CD8-positive, alpha-beta T cell (primary cell): ENCODE measurements at regions of chr3 and their contacts with region 1.

Region 1: GRCh38 chr3:100737334-100737733 is 28.0 kb downstream of the TFG start:
- DNase-seq: peak in 1 of 9 experiments; percentile 14
- ATAC-seq: no peak
- H3K4me3 ChIP-seq: no peak overlapping the region
- H3K4me3 Mint-ChIP-seq: no peak overlapping the region
- H3K27ac ChIP-seq: no peak overlapping the region
- H3K27ac Mint-ChIP-seq: no peak overlapping the region
- H3K4me1 ChIP-seq: no peaks in the 10 kb centered on the region
- H3K4me1 Mint-ChIP-seq: peaks cover 9% of the 10 kb centered on the region
- H3K27me3 ChIP-seq: no peaks in the 10 kb centered on the region
- H3K27me3 Mint-ChIP-seq: no peaks in the 10 kb centered on the region
- CTCF ChIP-seq: peak; percentile 20

Region 2: GRCh38 chr3:100136921-100137320 is 600.4 kb before region 1 on chr3:
- CTCF ChIA-PET with region 1: no interaction called
- POLR2A ChIA-PET with region 1: no interaction called
- intact Hi-C with region 1: no loop called
- DNase-seq: no peak
- ATAC-seq: no peak
- H3K4me3 ChIP-seq: no peak overlapping the region
- H3K4me3 Mint-ChIP-seq: no peak overlapping the region
- H3K27ac ChIP-seq: no peak overlapping the region
- H3K27ac Mint-ChIP-seq: no peak overlapping the region
- H3K4me1 ChIP-seq: no peaks in the 10 kb centered on the region
- H3K4me1 Mint-ChIP-seq: no peaks in the 10 kb centered on the region
- H3K27me3 ChIP-seq: no peaks in the 10 kb centered on the region
- H3K27me3 Mint-ChIP-seq: no peaks in the 10 kb centered on the region
- CTCF ChIP-seq: no peak

Region 3: DNA sequence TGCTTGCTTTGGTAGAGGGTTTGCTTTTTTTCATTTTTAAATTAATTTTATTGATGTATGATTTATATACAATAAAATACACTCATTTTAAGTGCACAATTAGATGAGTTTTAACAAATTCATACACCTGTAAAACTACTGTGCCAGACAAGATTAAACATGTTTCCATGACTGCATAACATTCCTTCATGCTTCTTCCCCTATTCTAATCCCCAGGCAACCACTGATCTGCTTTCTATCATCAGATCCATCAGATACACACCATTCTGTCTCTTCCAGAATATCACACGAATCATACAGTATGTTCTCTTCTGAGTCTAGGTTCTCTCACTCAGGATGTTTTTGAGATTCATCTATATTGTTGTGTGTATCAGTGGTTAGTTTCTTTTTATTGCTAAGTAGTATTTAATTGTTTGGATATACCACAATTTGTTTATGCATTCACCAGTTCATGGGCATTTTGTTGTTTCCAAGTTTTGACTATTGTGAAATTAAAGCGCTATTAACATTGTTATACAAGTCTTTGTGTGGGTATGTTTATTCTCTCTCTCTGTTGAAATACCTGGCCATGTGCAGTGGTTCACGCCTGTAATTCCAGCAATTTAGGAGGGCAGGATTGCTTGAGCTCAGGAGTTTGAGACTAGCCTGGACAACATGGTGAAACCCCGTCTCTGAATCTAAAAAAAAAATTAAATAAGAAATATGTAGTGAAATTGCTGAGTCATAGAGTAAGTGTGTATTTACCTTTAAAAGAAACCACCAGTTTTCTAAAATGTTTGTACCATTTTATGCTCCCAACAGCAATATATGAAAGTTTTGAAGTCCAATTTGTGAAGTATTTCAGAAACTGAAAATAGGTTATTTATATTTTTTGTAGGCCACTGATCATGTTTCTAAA is 35.0 kb before region 1 on chr3:
- CTCF ChIA-PET with region 1: no interaction called
- POLR2A ChIA-PET with region 1: no interaction called
- intact Hi-C with region 1: no loop called
- DNase-seq: no peak
- ATAC-seq: no peak
- H3K4me3 ChIP-seq: no peak overlapping the region
- H3K4me3 Mint-ChIP-seq: no peak overlapping the region
- H3K27ac ChIP-seq: no peak overlapping the region
- H3K27ac Mint-ChIP-seq: no peak overlapping the region
- H3K4me1 ChIP-seq: no peaks in the 10 kb centered on the region
- H3K4me1 Mint-ChIP-seq: no peaks in the 10 kb centered on the region
- H3K27me3 ChIP-seq: no peaks in the 10 kb centered on the region
- H3K27me3 Mint-ChIP-seq: peaks cover 3% of the 10 kb centered on the region
- CTCF ChIP-seq: no peak

Region 4: GRCh38 chr3:101381809-101382208 is 644.5 kb after region 1 on chr3:
- CTCF ChIA-PET with region 1: no interaction called
- POLR2A ChIA-PET with region 1: no interaction called
- intact Hi-C with region 1: loop called in 1 of 2 experiments (anchors 5 kb)
- DNase-seq: peak in 2 of 9 experiments; percentile 46 to 61
- ATAC-seq: peak; percentile 44
- H3K4me3 ChIP-seq: no peak overlapping the region
- H3K4me3 Mint-ChIP-seq: no peak overlapping the region
- H3K27ac ChIP-seq: peak overlapping the region in 1 of 2 experiments; percentile 25
- H3K27ac Mint-ChIP-seq: peak overlapping the region; percentile 49
- H3K4me1 ChIP-seq: peaks cover 12% of the 10 kb centered on the region
- H3K4me1 Mint-ChIP-seq: peaks cover 57% of the 10 kb centered on the region
- H3K27me3 ChIP-seq: no peaks in the 10 kb centered on the region
- H3K27me3 Mint-ChIP-seq: no peaks in the 10 kb centered on the region
- CTCF ChIP-seq: peak; percentile 55

Region 5: DNA sequence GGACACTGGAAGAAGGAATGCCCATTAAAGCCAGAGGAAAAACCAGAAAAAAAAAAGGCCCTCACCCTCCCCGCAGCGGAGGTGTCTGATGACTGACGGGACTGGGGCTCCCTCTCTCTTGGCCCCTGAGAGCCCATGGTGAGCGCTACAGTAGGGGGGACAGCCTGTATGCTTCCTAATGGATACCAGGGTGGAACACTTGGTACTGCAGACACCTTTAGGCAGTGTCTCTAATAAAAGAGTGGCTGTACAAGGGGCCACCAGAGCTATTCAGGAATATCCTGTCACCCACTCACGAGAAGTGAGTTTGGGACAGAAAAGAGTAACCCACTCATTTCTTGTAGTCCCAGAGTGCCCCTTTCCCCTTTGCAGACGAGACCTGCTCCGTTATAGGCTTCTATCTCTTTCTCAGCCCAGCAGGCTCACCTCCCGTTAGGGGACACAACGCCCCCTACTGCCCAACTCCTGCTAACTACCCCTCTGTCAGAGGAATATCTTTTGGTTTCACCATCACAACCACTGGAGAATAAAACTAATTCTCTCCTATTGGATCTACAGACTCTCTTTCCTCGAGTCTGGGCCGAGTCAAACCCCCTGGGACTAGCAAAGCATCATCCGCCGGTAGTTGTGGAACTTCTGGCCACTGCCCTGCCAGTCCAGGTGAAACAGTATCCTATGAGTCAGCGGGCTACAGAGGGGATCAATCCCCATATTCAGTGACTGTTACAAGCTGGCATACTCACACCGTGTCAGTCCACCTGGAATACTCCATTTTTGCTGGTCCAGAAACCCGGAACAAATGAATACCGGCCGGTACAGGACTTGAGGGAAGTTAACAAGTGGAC is 898.8 kb after region 1 on chr3:
- CTCF ChIA-PET with region 1: no interaction called
- POLR2A ChIA-PET with region 1: no interaction called
- intact Hi-C with region 1: loop called in 1 of 2 experiments (anchors 5 kb)
- DNase-seq: peak; percentile 48 to 74 (median 70)
- ATAC-seq: peak; percentile 94
- H3K4me3 ChIP-seq: no peak overlapping the region
- H3K4me3 Mint-ChIP-seq: no peak overlapping the region
- H3K27ac ChIP-seq: no peak overlapping the region
- H3K27ac Mint-ChIP-seq: no peak overlapping the region
- H3K4me1 ChIP-seq: no peaks in the 10 kb centered on the region
- H3K4me1 Mint-ChIP-seq: peaks cover 4% of the 10 kb centered on the region
- H3K27me3 ChIP-seq: no peaks in the 10 kb centered on the region
- H3K27me3 Mint-ChIP-seq: no peaks in the 10 kb centered on the region
- CTCF ChIP-seq: peak; percentile 68